A549 (cell line): ENCODE measurements at regions of chr2 and their contacts with region 1.

Region 1: DNA sequence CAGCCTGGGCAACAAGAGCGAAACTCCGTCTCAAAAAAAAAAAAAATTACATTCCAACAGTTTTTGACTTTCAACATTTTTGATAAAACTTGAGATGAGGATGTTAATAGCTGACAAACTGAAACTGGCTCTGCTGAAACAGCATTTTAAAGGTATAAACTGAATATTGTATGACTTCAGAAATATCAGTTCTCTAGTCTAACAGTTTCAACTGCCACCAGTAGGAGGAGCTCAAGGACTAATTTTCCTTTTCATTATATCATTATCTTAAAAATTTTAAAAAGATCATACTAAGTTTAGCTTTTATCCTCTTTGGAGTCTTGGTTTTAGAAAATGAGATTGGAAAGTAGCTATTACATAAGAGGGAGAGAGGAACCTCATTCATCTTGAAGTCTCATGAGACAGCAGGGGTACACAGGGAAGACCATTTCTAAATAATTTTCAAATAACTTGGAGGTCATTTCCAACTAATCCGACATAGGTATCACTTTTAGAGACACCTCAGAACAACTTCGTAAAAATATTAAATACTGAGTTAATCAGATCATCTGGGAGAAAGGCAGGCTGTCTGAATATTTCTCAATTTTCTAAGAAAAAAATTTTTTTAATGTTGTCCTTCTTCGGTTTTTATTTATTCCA is 37.6 kb upstream of the MCM6 start:
- DNase-seq: peak; percentile 12 to 45
- ATAC-seq: peak in 1 of 2 experiments; percentile 73; a peak in 4 of 6 replicates
- H3K4me3 ChIP-seq: no peak overlapping the region
- H3K27ac ChIP-seq: no peak overlapping the region
- H3K4me1 ChIP-seq: no peaks in the 10 kb centered on the region
- CTCF ChIP-seq: peak; percentile 81
- EP300 ChIP-seq: no peak
- POLR2A ChIP-seq: no peak
- RAD21 ChIP-seq: peak; percentile 80 to 81

Region 2: GRCh38 chr2:135820003-135820618 is 93.7 kb before region 1 on chr2:
- CTCF ChIA-PET with region 1: no interaction called
- POLR2A ChIA-PET with region 1: no interaction called
- DNase-seq: no peak
- ATAC-seq: no peak
- H3K4me3 ChIP-seq: no peak overlapping the region
- H3K27ac ChIP-seq: no peak overlapping the region
- H3K4me1 ChIP-seq: no peaks in the 10 kb centered on the region
- CTCF ChIP-seq: no peak
- EP300 ChIP-seq: no peak
- POLR2A ChIP-seq: no peak
- RAD21 ChIP-seq: no peak

Region 3: GRCh38 chr2:135931776-135932443 is 18.1 kb after region 1 on chr2:
- CTCF ChIA-PET with region 1: interaction called, 13 read pairs
- POLR2A ChIA-PET with region 1: no interaction called
- DNase-seq: no peak
- ATAC-seq: no peak
- H3K4me3 ChIP-seq: no peak overlapping the region
- H3K27ac ChIP-seq: no peak overlapping the region
- H3K4me1 ChIP-seq: no peaks in the 10 kb centered on the region
- CTCF ChIP-seq: no peak
- EP300 ChIP-seq: no peak
- POLR2A ChIP-seq: no peak
- RAD21 ChIP-seq: no peak

Region 4: DNA sequence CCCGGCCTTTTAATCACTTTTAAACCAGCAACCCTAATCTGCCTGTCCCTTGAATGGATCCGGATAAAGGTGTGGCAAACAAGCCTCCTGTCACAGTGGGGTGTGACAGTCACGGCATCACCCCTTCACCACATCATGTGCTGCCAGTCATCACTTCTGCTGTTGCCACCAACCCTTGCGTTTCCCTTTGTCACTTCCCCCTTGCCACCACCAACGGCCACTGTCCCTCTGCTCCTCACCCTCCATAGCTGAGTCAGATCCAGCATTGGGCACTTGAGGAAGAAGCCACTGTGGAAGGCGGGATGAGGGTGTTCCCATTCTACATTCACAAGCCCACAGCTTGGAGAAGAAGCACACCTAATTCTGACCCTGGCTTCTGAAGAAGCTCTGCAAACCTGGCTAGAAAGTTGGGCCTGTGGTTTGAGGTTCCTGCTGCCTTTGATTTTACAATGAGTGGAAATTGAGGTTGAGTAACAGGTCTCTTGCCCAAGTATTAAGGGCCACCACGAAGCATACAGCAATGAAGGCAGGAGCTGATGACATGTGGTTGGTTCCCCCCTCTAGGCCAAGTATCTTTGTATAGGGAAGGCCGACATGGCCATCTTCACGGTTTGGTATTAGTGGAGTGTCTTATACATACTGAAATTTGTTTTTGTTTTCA is 94.5 kb after region 1 on chr2:
- CTCF ChIA-PET with region 1: no interaction called
- POLR2A ChIA-PET with region 1: no interaction called
- DNase-seq: no peak
- ATAC-seq: no peak
- H3K4me3 ChIP-seq: no peak overlapping the region
- H3K27ac ChIP-seq: no peak overlapping the region
- H3K4me1 ChIP-seq: peaks cover 15% of the 10 kb centered on the region
- CTCF ChIP-seq: no peak
- EP300 ChIP-seq: no peak
- POLR2A ChIP-seq: no peak
- RAD21 ChIP-seq: no peak

Region 5: DNA sequence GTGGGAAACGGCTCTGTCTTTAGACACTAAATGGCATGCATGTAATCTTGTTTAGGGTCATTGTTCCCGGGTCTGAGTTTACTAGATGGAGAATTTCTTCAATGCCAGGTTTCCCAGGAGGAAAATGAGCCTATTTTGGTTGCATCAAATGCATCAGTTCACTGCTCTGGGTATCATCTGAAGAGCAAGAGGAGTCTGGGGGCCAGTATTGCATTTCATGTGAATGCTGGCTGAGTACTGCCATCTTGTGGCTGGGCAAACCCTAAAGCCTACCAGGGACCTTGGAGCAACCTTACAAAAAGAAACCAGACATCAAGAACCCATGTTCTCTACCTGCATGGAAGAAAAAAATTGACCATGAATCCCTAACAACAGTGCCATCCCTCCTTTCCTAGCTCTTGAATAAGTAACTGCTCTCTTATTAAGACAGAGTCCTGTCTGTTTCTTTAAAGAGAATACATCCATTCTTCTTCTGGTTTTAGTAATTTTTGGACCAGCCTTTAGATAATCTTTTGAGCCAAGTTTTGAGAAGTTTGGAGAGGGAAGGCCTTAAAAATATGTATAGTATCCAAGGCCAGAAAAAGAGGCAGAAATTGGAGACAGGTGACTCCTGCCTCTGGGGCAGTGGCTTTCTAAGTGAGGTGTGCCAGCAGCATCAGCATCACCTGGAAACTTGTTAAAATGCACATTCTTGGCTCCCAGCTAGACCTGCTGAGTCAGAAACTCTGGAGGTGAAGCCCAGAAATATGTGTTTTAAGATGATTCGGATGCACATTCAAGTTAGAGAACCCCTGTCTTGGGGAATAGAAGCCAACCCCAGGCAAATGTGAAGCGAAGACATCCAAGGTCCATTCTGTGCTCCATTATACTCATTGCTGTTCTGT is 465.1 kb after region 1 on chr2:
- CTCF ChIA-PET with region 1: interaction called, 56 read pairs
- POLR2A ChIA-PET with region 1: no interaction called
- DNase-seq: peak; percentile 21 to 53
- ATAC-seq: peak; percentile 87 to 93
- H3K4me3 ChIP-seq: no peak overlapping the region
- H3K27ac ChIP-seq: no peak overlapping the region
- H3K4me1 ChIP-seq: no peaks in the 10 kb centered on the region
- CTCF ChIP-seq: peak; percentile 80
- EP300 ChIP-seq: no peak
- POLR2A ChIP-seq: no peak
- RAD21 ChIP-seq: peak; percentile 90 to 92

Region 6: GRCh38 chr2:136384531-136385303 is 470.9 kb after region 1 on chr2:
- CTCF ChIA-PET with region 1: interaction called, 56 read pairs
- POLR2A ChIA-PET with region 1: no interaction called
- DNase-seq: peak; percentile 9 to 33
- ATAC-seq: peak; percentile 87 to 97
- H3K4me3 ChIP-seq: no peak overlapping the region
- H3K27ac ChIP-seq: no peak overlapping the region
- H3K4me1 ChIP-seq: no peaks in the 10 kb centered on the region
- CTCF ChIP-seq: peak; percentile 49; the same call in 2 of the 3 replicates
- EP300 ChIP-seq: no peak
- POLR2A ChIP-seq: no peak
- RAD21 ChIP-seq: peak; percentile 60 to 79